ENCODE measurements at regions of chr14 and their contacts with region 1.

Region 1: GRCh38 chr14:24271134-24271833 is at the start of gene RABGGTA:
- DNase-seq: peak; percentile 91 to 93
- ATAC-seq: peak; percentile 91 to 98
- H3K4me3 ChIP-seq: peak within 1 kb of the TSS; percentile 59
- H3K27ac ChIP-seq: peak within 1 kb of the TSS; percentile 89 to 97
- H3K4me1 ChIP-seq: 0 out of 3 replicates have a peak, but pooled peaks cover 5% of the 10 kb centered on the region
- CTCF ChIP-seq: peak; percentile 62
- EP300 ChIP-seq: no peak
- POLR2A ChIP-seq: peak; percentile 42
- RAD21 ChIP-seq: no peak
- polyA plus RNA-seq, gene RABGGTA: 18.6 and 22.4 TPM in 2 replicates

Region 2: DNA sequence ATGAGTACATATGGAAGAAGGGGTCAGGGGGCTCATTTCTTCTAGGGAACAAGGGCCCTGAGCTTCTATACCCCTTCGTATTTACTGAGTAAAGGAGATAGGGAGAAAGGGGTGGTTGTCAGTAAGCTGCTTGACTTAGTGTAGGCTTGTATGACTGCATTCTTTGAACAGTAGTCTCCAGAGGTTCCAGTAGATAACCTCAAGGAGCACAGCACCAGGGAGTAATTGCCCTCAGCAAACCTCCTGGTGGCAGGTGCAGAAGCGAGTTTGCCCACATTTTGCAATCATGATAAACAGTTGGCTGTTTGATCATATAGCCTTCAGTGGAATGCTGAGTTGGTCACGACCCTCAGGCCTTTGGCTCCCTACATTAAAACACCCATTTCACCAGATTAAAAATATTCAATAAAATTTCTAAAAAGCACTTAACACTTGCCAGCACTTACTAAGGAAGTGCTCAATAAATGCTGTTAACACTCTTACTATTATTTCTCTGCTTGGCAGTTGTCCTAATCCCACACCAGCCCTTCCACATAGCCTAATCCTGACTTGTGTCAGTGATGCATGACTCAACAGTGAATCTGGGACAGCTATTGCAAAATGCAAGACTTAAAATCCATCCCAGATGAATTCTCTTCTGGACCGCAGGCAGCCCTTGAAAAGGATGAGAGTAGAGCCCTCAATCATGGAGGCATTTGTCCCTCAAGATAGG is 286.2 kb before region 1 on chr14:
- CTCF ChIA-PET with region 1: no interaction called
- POLR2A ChIA-PET with region 1: no interaction called
- DNase-seq: peak; percentile 10 to 70
- ATAC-seq: peak in 1 of 2 experiments; percentile 42; a peak in 2 of 6 replicates
- H3K4me3 ChIP-seq: no peak overlapping the region
- H3K27ac ChIP-seq: peak overlapping the region; percentile 73 to 79
- H3K4me1 ChIP-seq: peaks cover 41% of the 10 kb centered on the region
- CTCF ChIP-seq: no peak
- EP300 ChIP-seq: peak in 1 of 2 experiments; percentile 46; a peak in 1 of 5 replicates
- POLR2A ChIP-seq: no peak
- RAD21 ChIP-seq: no peak; a peak in 1 of 5 replicates

Region 3: GRCh38 chr14:24251880-24252288 is 19.4 kb before region 1 on chr14:
- CTCF ChIA-PET with region 1: interaction called, 4 read pairs
- POLR2A ChIA-PET with region 1: interaction called, 15 read pairs
- DNase-seq: no peak
- ATAC-seq: peak; percentile 47 to 64; a peak in 5 of 6 replicates
- H3K4me3 ChIP-seq: no peak overlapping the region
- H3K27ac ChIP-seq: no peak overlapping the region
- H3K4me1 ChIP-seq: peaks cover 5% of the 10 kb centered on the region; the same call in 1 of the 3 replicates
- CTCF ChIP-seq: no peak
- EP300 ChIP-seq: no peak
- POLR2A ChIP-seq: no peak
- RAD21 ChIP-seq: no peak

Region 4: GRCh38 chr14:24259252-24259995 is 11.9 kb before region 1 on chr14:
- CTCF ChIA-PET with region 1: interaction called, 11 read pairs
- POLR2A ChIA-PET with region 1: interaction called, 12 read pairs
- DNase-seq: no peak
- ATAC-seq: peak in 1 of 2 experiments; percentile 9; a peak in 1 of 6 replicates
- H3K4me3 ChIP-seq: no peak overlapping the region
- H3K27ac ChIP-seq: peak overlapping the region in 1 of 2 experiments; percentile 49; a peak in 2 of 6 replicates
- H3K4me1 ChIP-seq: peaks cover 8% of the 10 kb centered on the region
- CTCF ChIP-seq: no peak
- EP300 ChIP-seq: no peak
- POLR2A ChIP-seq: no peak
- RAD21 ChIP-seq: no peak

Region 5: GRCh38 chr14:24299255-24300195 is 28.2 kb after region 1 on chr14 and contains the starts of genes DHRS1 and NOP9:
- CTCF ChIA-PET with region 1: interaction called, 469 read pairs
- POLR2A ChIA-PET with region 1: interaction called, 14 read pairs
- DNase-seq: peak; percentile 87 to 91
- ATAC-seq: peak; percentile 62 to 82
- H3K4me3 ChIP-seq: peak within 1 kb of the TSS; percentile 81
- H3K27ac ChIP-seq: peak within 1 kb of the TSS; percentile 82 to 92
- H3K4me1 ChIP-seq: peaks cover 15% of the 10 kb centered on the region; the same call in 2 of the 3 replicates
- CTCF ChIP-seq: no peak
- EP300 ChIP-seq: no peak
- POLR2A ChIP-seq: peak; percentile 61
- RAD21 ChIP-seq: no peak
- polyA plus RNA-seq, gene DHRS1: 17.4 and 17.9 TPM in 2 replicates
- polyA plus RNA-seq, gene NOP9: 16.5 and 23.6 TPM in 2 replicates

Region 6: GRCh38 chr14:24310646-24311604 is 39.6 kb after region 1 on chr14 and contains the start of gene LTB4R:
- CTCF ChIA-PET with region 1: interaction called, 469 read pairs
- POLR2A ChIA-PET with region 1: interaction called, 13 read pairs
- DNase-seq: no peak
- ATAC-seq: no peak
- H3K4me3 ChIP-seq: no peak within 1 kb of the TSS
- H3K27ac ChIP-seq: no peak within 1 kb of the TSS
- H3K4me1 ChIP-seq: peaks cover 16% of the 10 kb centered on the region
- CTCF ChIP-seq: no peak
- EP300 ChIP-seq: no peak
- POLR2A ChIP-seq: no peak
- RAD21 ChIP-seq: no peak
- polyA plus RNA-seq, gene LTB4R: 10.2 and 13.2 TPM in 2 replicates